Naive thymus-derived CD8-positive, alpha-beta T cell (primary cell): ENCODE measurements at regions of chr12 and their contacts with region 1.

Region 1: GRCh38 chr12:69330475-69331473 is 17.4 kb upstream of the LYZ start:
- DNase-seq: peak; percentile 23 to 83 (median 70)
- ATAC-seq: peak; percentile 65 to 83
- H3K4me3 Mint-ChIP-seq: peak overlapping the region; percentile 67 to 96 (median 94)
- H3K27ac Mint-ChIP-seq: peak overlapping the region; percentile 94 to 99 (median 98)
- H3K4me1 Mint-ChIP-seq: peaks cover 24 to 57% (median 50%) of the 10 kb centered on the region in 4 donors
- H3K27me3 Mint-ChIP-seq: no peaks in the 10 kb centered on the region

Region 2: DNA sequence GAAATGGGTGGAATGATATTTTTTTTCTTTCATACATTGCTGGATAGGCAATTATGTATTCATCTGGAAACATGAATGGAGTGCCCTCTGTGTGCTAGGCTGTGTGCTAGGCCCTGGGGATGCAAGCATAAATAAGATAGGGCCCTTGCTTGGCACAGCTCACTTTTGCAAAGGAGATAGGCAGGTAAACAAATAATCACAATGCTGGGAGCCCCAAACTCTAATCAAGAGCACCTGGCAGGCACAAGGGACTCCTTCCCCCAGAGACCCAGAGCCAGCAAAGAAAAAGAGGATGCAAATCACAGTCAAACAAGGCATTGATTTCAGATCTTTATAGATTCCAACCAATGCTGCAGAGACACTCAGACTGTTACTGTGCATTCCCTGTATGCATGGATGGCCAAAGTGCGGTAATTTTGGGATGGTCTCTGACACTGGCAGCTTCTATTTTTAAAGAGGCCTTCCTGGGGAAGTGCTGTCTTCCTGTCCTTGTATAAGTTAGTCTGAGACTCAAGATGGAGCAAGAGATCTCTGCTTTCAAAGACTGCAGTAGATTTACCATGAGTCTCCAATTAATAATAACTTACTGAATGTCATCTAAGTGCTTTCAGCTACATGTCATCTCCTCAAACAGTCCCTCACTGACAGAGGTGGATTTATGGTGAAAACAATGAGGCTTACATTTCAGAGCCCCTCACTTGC is 352.7 kb before region 1 on chr12:
- POLR2A ChIA-PET with region 1: no interaction called
- DNase-seq: no peak
- ATAC-seq: no peak
- H3K4me3 Mint-ChIP-seq: no peak overlapping the region
- H3K27ac Mint-ChIP-seq: no peak overlapping the region
- H3K4me1 Mint-ChIP-seq: peaks cover 0 to 8% (median 1%) of the 10 kb centered on the region in 4 donors
- H3K27me3 Mint-ChIP-seq: peaks cover 4 to 23% (median 5%) of the 10 kb centered on the region in 5 donors

Region 3: GRCh38 chr12:69239352-69239921 is 91.3 kb before region 1 on chr12 and contains the start of gene CPSF6:
- POLR2A ChIA-PET with region 1: interaction called, 17 read pairs
- DNase-seq: peak; percentile 89 to 98 (median 96)
- ATAC-seq: peak; percentile 85 to 89
- H3K4me3 Mint-ChIP-seq: peak within 1 kb of the TSS; percentile 92 to 100 (median 98)
- H3K27ac Mint-ChIP-seq: peak within 1 kb of the TSS; percentile 97 to 99 (median 99)
- H3K4me1 Mint-ChIP-seq: peaks cover 18 to 57% (median 49%) of the 10 kb centered on the region in 4 donors
- H3K27me3 Mint-ChIP-seq: no peaks in the 10 kb centered on the region
- polyA plus RNA-seq, gene CPSF6: 36.6 to 55.4 (median 46.0) TPM

Region 4: GRCh38 chr12:69254046-69254445 is 76.7 kb before region 1 on chr12:
- POLR2A ChIA-PET with region 1: no interaction called
- DNase-seq: peak in 4 of 10 donors; percentile 22 to 74 (median 69)
- ATAC-seq: peak; percentile 83 to 85
- H3K4me3 Mint-ChIP-seq: no peak overlapping the region
- H3K27ac Mint-ChIP-seq: peak overlapping the region; percentile 15 to 89 (median 65)
- H3K4me1 Mint-ChIP-seq: peaks cover 19 to 47% (median 41%) of the 10 kb centered on the region in 4 donors
- H3K27me3 Mint-ChIP-seq: no peaks in the 10 kb centered on the region

Region 5: DNA sequence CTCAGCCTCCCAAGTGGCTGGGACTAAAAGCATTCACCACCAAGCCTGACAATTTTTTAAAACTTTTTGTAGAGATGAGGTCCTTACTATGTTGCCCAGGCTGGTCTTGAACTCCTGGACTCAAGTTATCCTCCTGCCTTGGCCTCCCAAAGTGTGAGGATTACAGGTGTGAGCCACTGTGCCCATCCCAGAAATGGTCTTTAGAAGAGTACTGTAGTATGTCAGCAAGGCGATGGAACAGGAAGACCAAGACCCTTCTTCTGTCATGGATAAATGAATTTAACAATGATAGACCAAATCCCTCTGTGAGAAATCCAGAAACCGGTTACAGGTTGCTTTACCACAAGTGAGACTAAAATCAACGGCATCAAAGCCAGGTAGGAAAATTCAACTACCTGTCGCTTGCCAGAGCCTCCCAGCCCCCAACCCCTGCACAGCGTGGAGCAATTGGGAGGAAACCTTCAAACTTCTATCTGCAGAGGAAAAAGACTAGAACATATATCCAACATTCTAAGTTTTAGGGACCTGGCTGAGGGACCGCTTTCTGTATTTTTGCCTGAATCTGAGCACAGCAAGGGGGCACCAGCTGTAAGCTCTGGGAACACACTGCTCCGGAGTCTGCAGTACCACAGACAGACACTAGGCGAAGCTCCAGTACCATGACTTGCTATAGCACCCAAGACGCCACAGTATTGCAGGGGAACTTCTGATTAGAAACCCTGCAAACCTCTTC is 40.1 kb before region 1 on chr12:
- POLR2A ChIA-PET with region 1: interaction called, 20 read pairs
- DNase-seq: peak; percentile 59 to 90 (median 76)
- ATAC-seq: peak; percentile 100
- H3K4me3 Mint-ChIP-seq: peak overlapping the region in 1 of 10 donors; percentile 24
- H3K27ac Mint-ChIP-seq: peak overlapping the region in 1 of 10 donors; percentile 79
- H3K4me1 Mint-ChIP-seq: peaks cover 5 to 20% (median 8%) of the 10 kb centered on the region in 4 donors
- H3K27me3 Mint-ChIP-seq: peaks cover 2 to 26% (median 6%) of the 10 kb centered on the region in 5 donors

Region 6: GRCh38 chr12:69359531-69360347 is 29.0 kb after region 1 on chr12 and contains the start of gene YEATS4:
- POLR2A ChIA-PET with region 1: interaction called, 58 read pairs
- DNase-seq: peak; percentile 78 to 91 (median 84)
- ATAC-seq: peak; percentile 83 to 86
- H3K4me3 Mint-ChIP-seq: peak within 1 kb of the TSS; percentile 84 to 94 (median 92)
- H3K27ac Mint-ChIP-seq: peak within 1 kb of the TSS; percentile 84 to 96 (median 92)
- H3K4me1 Mint-ChIP-seq: peaks cover 11 to 30% (median 24%) of the 10 kb centered on the region in 4 donors
- H3K27me3 Mint-ChIP-seq: no peaks in the 10 kb centered on the region
- polyA plus RNA-seq, gene YEATS4: 50.9 to 66.4 (median 54.4) TPM

Region 7: GRCh38 chr12:69470189-69471075 is 139.7 kb after region 1 on chr12 and contains the start of gene FRS2:
- POLR2A ChIA-PET with region 1: interaction called, 23 read pairs
- DNase-seq: peak; percentile 72 to 89 (median 81)
- ATAC-seq: peak; percentile 98
- H3K4me3 Mint-ChIP-seq: peak within 1 kb of the TSS; percentile 96 to 100 (median 98)
- H3K27ac Mint-ChIP-seq: peak within 1 kb of the TSS; percentile 93 to 100 (median 97)
- H3K4me1 Mint-ChIP-seq: peaks cover 31 to 75% (median 47%) of the 10 kb centered on the region in 4 donors
- H3K27me3 Mint-ChIP-seq: no peaks in the 10 kb centered on the region
- polyA plus RNA-seq, gene FRS2: 11.1 to 12.3 (median 11.6) TPM

Region 8: GRCh38 chr12:69585189-69586062 is 254.7 kb after region 1 on chr12 and contains the start of gene CCT2:
- POLR2A ChIA-PET with region 1: interaction called, 37 read pairs
- DNase-seq: peak; percentile 90 to 98 (median 96)
- ATAC-seq: peak; percentile 88 to 91
- H3K4me3 Mint-ChIP-seq: peak within 1 kb of the TSS; percentile 93 to 99 (median 96)
- H3K27ac Mint-ChIP-seq: peak within 1 kb of the TSS; percentile 89 to 99 (median 98)
- H3K4me1 Mint-ChIP-seq: peaks cover 8 to 25% (median 20%) of the 10 kb centered on the region in 4 donors
- H3K27me3 Mint-ChIP-seq: no peaks in the 10 kb centered on the region
- polyA plus RNA-seq, gene CCT2: 169 to 193 (median 182) TPM